PC-3 (cell line): ENCODE measurements at regions of chr6 and their contacts with region 1.

Region 1: GRCh38 chr6:53651764-53652401 is 13.7 kb downstream of the KLHL31 start:
- DNase-seq: peak; percentile 93
- ATAC-seq: peak; percentile 92
- H3K4me3 ChIP-seq: peak overlapping the region; percentile 82
- H3K27ac ChIP-seq: peak overlapping the region; percentile 75
- H3K4me1 ChIP-seq: peaks cover 42% of the 10 kb centered on the region
- H3K27me3 ChIP-seq: no peaks in the 10 kb centered on the region
- CTCF ChIP-seq: 0 out of 2 replicates have a peak, but pooled peaks have one; percentile 22

Region 2: DNA sequence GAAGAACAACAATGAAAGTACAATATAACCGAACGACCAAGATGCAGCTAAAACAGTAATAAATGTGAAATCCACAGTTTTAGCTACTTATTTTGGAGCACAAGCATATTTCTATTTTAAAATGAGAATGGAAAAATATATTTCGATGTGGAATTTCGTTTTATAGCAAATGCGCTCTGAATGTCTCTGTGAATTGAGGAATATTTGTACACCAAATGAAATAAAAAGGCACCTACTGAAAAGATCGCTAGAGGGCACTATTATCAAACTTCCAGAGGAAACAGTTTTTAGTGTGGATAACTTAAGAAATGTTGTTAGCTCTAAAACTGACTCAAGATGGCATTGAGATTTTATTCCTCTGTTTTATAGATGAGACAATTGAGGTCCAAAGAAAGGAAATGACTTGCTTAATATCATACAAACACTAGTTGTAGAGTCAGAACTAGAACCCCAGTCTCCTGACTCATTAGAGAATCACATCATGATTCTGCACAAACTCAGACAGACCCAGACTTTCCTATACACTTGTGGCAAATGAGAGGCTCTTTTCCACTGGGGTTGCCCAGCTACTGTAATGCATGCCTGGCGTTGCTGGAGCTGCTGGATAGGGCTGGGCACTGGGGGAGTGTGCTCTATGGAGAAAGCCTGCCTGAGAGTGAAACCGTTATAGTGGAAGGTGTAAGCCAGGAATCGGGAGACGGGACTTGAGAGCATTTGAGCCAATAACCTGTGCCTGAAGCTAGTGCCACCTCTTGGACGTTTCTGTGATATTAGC is 158.8 kb before region 1 on chr6:
- CTCF ChIA-PET with region 1: interaction called, 17 read pairs
- POLR2A ChIA-PET with region 1: no interaction called
- intact Hi-C with region 1: loop called (anchors 1 kb)
- DNase-seq: peak; percentile 84
- ATAC-seq: peak; percentile 72
- H3K4me3 ChIP-seq: peak overlapping the region; percentile 69
- H3K27ac ChIP-seq: no peak overlapping the region
- H3K4me1 ChIP-seq: peaks cover 33% of the 10 kb centered on the region
- H3K27me3 ChIP-seq: no peaks in the 10 kb centered on the region
- CTCF ChIP-seq: peak; percentile 88

Region 3: GRCh38 chr6:53524455-53524815 is 127.4 kb before region 1 on chr6:
- CTCF ChIA-PET with region 1: no interaction called
- POLR2A ChIA-PET with region 1: no interaction called
- intact Hi-C with region 1: no loop called
- DNase-seq: peak; percentile 73
- ATAC-seq: peak; percentile 93
- H3K4me3 ChIP-seq: no peak overlapping the region
- H3K27ac ChIP-seq: no peak overlapping the region
- H3K4me1 ChIP-seq: peaks cover 22% of the 10 kb centered on the region
- H3K27me3 ChIP-seq: no peaks in the 10 kb centered on the region
- CTCF ChIP-seq: no peak

Region 4: GRCh38 chr6:53615633-53616449 is 36.0 kb before region 1 on chr6:
- CTCF ChIA-PET with region 1: interaction called, 6 read pairs
- POLR2A ChIA-PET with region 1: interaction called, 3 read pairs
- intact Hi-C with region 1: loop called (anchors 1 kb)
- DNase-seq: peak; percentile 99
- ATAC-seq: peak; percentile 94
- H3K4me3 ChIP-seq: peak overlapping the region; percentile 29
- H3K27ac ChIP-seq: peak overlapping the region; percentile 93
- H3K4me1 ChIP-seq: peaks cover 61% of the 10 kb centered on the region
- H3K27me3 ChIP-seq: no peaks in the 10 kb centered on the region
- CTCF ChIP-seq: no peak

Region 5: DNA sequence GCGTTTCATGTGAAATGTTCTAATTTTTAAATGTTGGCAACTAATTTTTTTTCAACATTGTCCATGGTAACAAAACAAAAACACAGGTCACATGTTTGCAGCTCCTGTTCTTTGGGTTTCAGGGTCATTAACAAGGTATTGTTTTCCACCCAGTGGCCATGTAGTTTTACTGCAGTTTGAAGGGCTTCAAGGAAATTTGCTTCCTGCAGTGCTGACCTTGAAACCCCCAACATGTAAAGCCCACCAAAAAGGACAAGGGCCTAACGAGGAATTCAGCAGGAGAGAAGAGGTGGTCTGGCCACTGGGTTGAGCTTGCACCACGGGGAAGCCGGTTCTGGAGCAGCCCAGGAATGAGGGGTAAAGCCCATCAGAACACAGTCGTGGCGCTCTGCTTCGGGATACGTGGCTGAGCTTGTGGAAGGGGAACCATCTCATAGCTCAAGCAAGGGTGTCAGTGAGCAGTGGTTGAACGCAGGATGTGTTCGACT is 27.6 kb after region 1 on chr6:
- CTCF ChIA-PET with region 1: no interaction called
- POLR2A ChIA-PET with region 1: interaction called, 7 read pairs
- intact Hi-C with region 1: loop called (anchors 1 kb)
- DNase-seq: peak; percentile 59
- ATAC-seq: peak; percentile 60; the same call in 1 of the 2 replicates
- H3K4me3 ChIP-seq: no peak overlapping the region
- H3K27ac ChIP-seq: no peak overlapping the region
- H3K4me1 ChIP-seq: peaks cover 1% of the 10 kb centered on the region
- H3K27me3 ChIP-seq: no peaks in the 10 kb centered on the region
- CTCF ChIP-seq: peak; percentile 72

Region 6: DNA sequence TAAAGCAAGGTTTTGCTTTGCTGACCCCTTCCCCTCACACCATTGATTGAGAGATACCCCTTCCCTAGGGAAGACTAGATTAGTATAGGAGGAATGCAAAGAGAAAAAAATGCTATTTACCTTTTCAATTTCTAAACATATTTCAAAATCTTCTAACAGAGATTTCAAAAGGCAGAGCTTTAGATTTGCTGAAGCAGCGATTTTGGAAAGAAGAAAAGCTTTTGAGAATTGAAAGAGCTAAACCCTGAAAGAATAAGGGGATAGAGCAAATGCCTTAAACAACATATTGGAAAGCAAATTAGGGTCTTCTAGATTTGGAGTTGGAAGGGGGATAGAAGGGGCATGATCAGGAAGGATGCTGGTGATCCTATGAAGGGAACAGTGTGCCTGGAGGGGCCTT is 60.2 kb after region 1 on chr6:
- CTCF ChIA-PET with region 1: no interaction called
- POLR2A ChIA-PET with region 1: no interaction called
- intact Hi-C with region 1: no loop called
- DNase-seq: no peak
- ATAC-seq: no peak
- H3K4me3 ChIP-seq: no peak overlapping the region
- H3K27ac ChIP-seq: no peak overlapping the region
- H3K4me1 ChIP-seq: no peaks in the 10 kb centered on the region
- H3K27me3 ChIP-seq: no peaks in the 10 kb centered on the region
- CTCF ChIP-seq: no peak

Region 7: DNA sequence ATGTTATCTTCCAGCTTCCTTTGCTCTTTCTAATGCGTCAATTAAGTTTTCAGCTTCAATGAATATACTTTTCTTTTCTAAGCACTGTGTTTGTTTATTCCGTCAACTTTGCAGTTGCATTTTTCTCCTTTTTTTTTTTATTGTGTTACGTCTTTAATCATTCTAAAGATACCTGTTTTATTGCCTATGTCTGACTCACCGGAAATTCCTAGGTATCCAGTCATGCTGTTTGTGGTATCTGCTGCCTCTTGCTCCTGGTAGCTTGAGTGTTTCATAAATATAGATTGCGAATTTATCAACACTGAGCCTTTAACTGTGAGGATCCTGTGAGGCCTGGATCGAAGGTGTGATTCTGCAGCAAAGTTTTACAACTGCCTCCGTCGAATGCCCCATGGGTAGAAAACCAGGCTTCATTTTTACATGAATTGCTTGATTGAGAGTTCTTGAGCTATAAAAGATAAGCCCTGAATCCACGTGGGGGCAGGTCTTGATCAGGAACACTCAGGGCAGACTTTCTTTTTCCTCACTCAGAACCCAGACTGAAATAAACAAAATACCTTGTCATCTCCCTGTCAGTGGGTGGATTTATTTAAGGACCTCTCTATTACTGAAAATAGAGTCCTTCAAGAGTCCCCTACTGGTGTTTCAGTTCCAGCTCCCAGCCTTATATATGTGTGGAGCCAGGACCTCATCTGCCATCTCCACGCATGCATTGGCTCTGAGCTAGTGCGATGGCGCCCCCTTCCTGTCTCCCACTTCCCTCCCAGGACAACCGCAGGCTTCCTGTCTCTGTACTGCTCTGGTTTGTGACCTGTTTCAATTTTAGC is 82.8 kb after region 1 on chr6:
- CTCF ChIA-PET with region 1: interaction called, 3 read pairs
- POLR2A ChIA-PET with region 1: interaction called, 12 read pairs
- intact Hi-C with region 1: no loop called
- DNase-seq: peak; percentile 94
- ATAC-seq: peak; percentile 92
- H3K4me3 ChIP-seq: peak overlapping the region; percentile 37
- H3K27ac ChIP-seq: peak overlapping the region; percentile 74
- H3K4me1 ChIP-seq: peaks cover 32% of the 10 kb centered on the region
- H3K27me3 ChIP-seq: no peaks in the 10 kb centered on the region
- CTCF ChIP-seq: peak; percentile 80